ENCODE measurements at regions of chr1 and their contacts with region 1.

Region 1: DNA sequence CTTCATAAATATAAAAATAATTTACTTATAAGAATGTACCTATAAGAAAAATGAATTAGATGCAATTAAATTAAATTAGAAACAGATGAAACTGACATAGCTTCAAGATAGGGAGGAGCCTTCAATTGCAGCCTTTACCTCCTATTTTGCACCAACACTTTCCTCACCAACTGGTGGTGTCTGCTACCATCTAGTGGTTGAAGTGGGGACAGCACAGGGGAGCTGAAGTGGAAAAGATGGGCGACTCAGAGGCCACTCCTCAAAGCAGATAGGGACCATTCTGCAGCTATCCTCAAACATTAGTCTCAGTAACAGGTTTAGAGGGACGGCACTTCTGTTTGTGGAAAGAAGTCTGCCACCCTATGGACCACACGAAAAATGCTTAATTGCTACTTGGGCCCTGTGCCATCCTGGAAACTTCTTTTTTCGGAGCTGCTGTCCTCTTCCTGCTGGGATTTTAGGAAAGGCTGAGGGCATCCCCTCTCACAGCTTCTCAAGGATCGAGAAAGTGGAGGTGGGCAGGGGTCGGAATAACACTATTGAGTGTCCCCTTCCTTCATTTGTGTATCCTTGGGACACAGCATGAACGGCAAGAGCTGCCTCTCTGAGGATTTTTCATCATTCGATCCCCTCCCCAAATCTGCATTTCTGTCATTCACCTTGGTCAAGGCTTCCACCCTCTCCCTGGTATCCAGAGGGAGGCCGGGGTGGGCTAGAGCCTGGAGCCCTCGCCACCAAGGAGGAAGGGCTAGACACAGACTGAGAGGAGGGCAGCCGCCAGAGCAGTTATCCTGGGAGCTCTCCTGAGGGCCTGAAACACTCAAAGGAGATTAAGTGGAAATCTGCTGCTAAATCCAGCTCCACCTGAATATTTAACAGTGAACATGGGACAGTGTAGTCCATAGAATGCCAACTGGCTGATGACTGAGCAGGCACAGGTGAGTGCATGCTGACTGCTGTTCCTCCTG is 9.6 kb downstream of the PROK1 start:
- DNase-seq: peak; percentile 50
- H3K4me3 ChIP-seq: no peak overlapping the region
- H3K27ac ChIP-seq: no peak overlapping the region
- H3K27me3 ChIP-seq: peaks cover 7% of the 10 kb centered on the region
- CTCF ChIP-seq: peak; percentile 98

Region 2: DNA sequence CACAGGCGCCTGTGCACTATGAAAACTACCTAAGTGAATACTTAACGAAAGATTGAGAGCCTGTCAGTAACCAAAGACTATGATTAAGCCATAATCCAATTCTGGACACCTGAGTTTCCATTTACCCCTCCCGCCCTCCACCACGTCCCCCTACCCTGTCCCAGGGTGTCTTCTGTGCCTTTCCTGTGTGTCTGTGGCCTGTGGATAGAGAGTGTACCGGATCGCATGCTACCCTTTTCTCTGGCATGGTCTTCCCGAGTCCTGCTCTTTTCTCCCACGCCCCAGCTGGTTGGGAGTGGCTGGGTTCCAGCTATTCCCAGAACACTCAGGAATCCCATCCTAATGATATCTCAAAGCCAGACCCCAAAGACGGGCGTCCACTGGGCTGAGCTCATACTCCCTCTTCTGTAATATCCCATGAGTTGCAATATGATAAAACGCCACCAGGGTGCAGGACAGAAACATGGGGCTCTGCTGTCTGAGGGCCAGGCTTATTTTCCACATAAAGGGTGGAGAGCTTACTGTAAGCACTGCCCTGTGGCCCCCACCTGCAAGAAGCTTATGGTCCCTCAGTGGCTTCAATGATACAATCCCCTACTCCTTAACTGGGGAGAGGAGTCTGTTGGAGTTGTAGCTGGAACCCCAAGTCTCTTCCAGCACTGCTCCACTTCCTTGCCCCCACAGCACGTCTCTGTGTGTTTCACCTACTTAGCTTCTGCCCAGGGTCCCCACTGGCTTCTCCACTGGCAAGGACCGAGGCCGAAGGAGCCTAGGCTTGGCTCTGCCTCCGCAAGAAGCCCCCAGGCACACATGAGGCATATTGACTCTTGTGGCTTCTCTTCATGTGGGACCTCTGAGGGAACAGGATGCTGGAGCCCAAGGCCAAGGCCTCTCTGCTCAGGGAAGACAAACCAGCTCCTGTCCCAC is 372.5 kb before region 1 on chr1:
- CTCF ChIA-PET with region 1: interaction called, 19 read pairs
- POLR2A ChIA-PET with region 1: no interaction called
- DNase-seq: peak; percentile 20
- H3K4me3 ChIP-seq: no peak overlapping the region
- H3K27ac ChIP-seq: no peak overlapping the region
- H3K27me3 ChIP-seq: peaks cover 73% of the 10 kb centered on the region
- CTCF ChIP-seq: peak; percentile 72

Region 3: GRCh38 chr1:110209715-110210603 is 250.6 kb before region 1 on chr1 and contains the start of gene KCNC4:
- CTCF ChIA-PET with region 1: interaction called, 571 read pairs
- POLR2A ChIA-PET with region 1: no interaction called
- DNase-seq: no peak
- H3K4me3 ChIP-seq: peak within 1 kb of the TSS; percentile 60
- H3K27ac ChIP-seq: no peak within 1 kb of the TSS
- H3K27me3 ChIP-seq: peaks cover 28% of the 10 kb centered on the region
- CTCF ChIP-seq: no peak
- polyA plus RNA-seq, gene KCNC4: 0.36 and 0.63 TPM in 2 replicates

Region 4: GRCh38 chr1:110243574-110243973 is 217.0 kb before region 1 on chr1:
- CTCF ChIA-PET with region 1: no interaction called
- POLR2A ChIA-PET with region 1: no interaction called
- DNase-seq: no peak
- H3K4me3 ChIP-seq: no peak overlapping the region
- H3K27ac ChIP-seq: no peak overlapping the region
- H3K27me3 ChIP-seq: peaks cover 16% of the 10 kb centered on the region
- CTCF ChIP-seq: no peak

Region 5: DNA sequence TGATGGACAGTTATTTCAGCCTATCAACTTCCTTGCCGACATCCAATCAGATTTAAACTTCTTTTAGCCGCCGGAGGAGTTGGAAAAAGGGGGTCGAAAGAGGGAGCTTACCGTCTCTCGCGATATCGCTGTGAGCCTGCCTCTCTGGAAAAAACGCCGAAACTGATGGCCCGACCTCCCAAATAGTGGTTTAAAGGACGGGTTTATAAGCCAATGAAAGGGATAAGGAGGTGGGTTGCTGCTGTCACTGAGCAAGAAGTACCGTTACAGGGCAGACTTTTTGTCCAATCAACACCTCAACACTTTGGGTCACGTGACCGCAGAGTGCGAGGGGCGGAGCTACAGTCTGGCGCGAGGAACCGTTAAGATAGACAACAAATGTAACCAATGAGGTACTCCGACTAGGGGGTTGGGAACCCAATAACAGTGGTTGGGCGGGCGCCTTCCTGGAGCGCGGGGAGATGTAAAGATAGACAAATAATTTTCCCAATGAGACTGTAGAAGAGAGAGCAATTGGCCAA is 121.6 kb before region 1 on chr1 and contains the start of gene RBM15:
- CTCF ChIA-PET with region 1: interaction called, 82 read pairs
- POLR2A ChIA-PET with region 1: interaction called, 14 read pairs
- DNase-seq: peak; percentile 100
- H3K4me3 ChIP-seq: peak within 1 kb of the TSS; percentile 98
- H3K27ac ChIP-seq: peak within 1 kb of the TSS; percentile 99
- H3K27me3 ChIP-seq: no peaks in the 10 kb centered on the region
- CTCF ChIP-seq: no peak
- polyA plus RNA-seq, gene RBM15: 8.9 and 9.6 TPM in 2 replicates

Region 6: GRCh38 chr1:110407260-110408210 is 53.0 kb before region 1 on chr1 and contains the start of gene LAMTOR5:
- CTCF ChIA-PET with region 1: interaction called, 378 read pairs
- POLR2A ChIA-PET with region 1: no interaction called
- DNase-seq: peak; percentile 65
- H3K4me3 ChIP-seq: peak within 1 kb of the TSS; percentile 98
- H3K27ac ChIP-seq: peak within 1 kb of the TSS; percentile 93
- H3K27me3 ChIP-seq: no peaks in the 10 kb centered on the region
- CTCF ChIP-seq: no peak
- polyA plus RNA-seq, gene LAMTOR5: 288 and 300 TPM in 2 replicates

Region 7: GRCh38 chr1:110430366-110430765 is 30.2 kb before region 1 on chr1:
- CTCF ChIA-PET with region 1: interaction called, 12 read pairs
- POLR2A ChIA-PET with region 1: no interaction called
- DNase-seq: no peak
- H3K4me3 ChIP-seq: no peak overlapping the region
- H3K27ac ChIP-seq: no peak overlapping the region
- H3K27me3 ChIP-seq: peaks cover 43% of the 10 kb centered on the region
- CTCF ChIP-seq: no peak

Region 8: DNA sequence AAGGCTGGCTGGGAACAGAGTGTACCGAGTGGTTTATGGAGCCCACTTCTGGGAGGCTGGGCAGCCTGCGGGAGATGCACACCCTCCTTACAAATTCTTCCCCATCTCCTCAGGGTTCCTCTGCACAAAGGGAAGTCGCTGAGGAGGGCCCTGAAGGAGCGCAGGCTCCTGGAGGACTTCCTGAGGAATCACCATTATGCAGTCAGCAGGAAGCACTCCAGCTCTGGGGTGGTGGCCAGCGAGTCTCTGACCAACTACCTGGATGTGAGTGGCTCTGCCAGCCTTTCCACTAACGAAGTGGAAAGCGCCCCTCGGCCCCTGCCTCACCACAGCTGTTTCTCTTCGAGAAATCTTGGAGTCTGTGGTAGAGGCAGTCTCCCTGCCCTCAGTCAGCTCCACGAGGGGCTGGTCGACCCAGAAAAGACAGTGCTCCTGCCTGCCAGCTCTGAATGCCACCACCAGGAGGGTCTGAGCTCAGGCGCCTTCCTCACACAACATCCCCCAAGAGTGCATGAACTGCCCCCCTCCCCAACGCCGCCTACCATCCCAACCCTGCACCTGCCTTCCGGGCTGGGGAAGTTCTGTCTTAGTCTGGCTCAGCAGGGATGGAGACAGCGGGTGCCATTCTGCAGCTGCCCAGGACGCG is 22.2 kb after region 1 on chr1:
- CTCF ChIA-PET with region 1: interaction called, 10 read pairs
- POLR2A ChIA-PET with region 1: no interaction called
- DNase-seq: no peak
- H3K4me3 ChIP-seq: no peak overlapping the region
- H3K27ac ChIP-seq: no peak overlapping the region
- H3K27me3 ChIP-seq: peaks cover 21% of the 10 kb centered on the region
- CTCF ChIP-seq: no peak